ENCODE measurements at regions of chr1 and their contacts with region 1.

Region 1: GRCh38 chr1:7845761-7846160 is 7.1 kb downstream of the UTS2 start:
- DNase-seq: no peak
- H3K4me3 ChIP-seq: no peak overlapping the region
- H3K27ac ChIP-seq: no peak overlapping the region
- H3K4me1 ChIP-seq: no peaks in the 10 kb centered on the region
- H3K27me3 ChIP-seq: no peaks in the 10 kb centered on the region
- CTCF ChIP-seq: no peak
- POLR2A ChIP-seq: no peak

Region 2: GRCh38 chr1:7704214-7705047 is 141.3 kb before region 1 on chr1:
- CTCF ChIA-PET with region 1: no interaction called
- POLR2A ChIA-PET with region 1: no interaction called
- dilution Hi-C with region 1: no loop called
- intact Hi-C with region 1: no loop called
- DNase-seq: peak; percentile 89
- H3K4me3 ChIP-seq: peak overlapping the region in 1 of 3 experiments; percentile 24
- H3K27ac ChIP-seq: no peak overlapping the region
- H3K4me1 ChIP-seq: no peaks in the 10 kb centered on the region
- H3K27me3 ChIP-seq: peaks cover 21 to 31% of the 10 kb centered on the region in 2 experiments
- CTCF ChIP-seq: no peak
- POLR2A ChIP-seq: no peak

Region 3: GRCh38 chr1:7893529-7894180 is 47.9 kb after region 1 on chr1:
- CTCF ChIA-PET with region 1: no interaction called
- POLR2A ChIA-PET with region 1: interaction called, 14 read pairs
- dilution Hi-C with region 1: no loop called
- intact Hi-C with region 1: no loop called
- DNase-seq: no peak
- H3K4me3 ChIP-seq: no peak overlapping the region
- H3K27ac ChIP-seq: no peak overlapping the region
- H3K4me1 ChIP-seq: no peaks in the 10 kb centered on the region
- H3K27me3 ChIP-seq: peaks cover 0 to 4% of the 10 kb centered on the region in 2 experiments
- CTCF ChIP-seq: no peak
- POLR2A ChIP-seq: no peak

Measured in endothelial cell of umbilical vein (primary cell).